Activated naive CD4-positive, alpha-beta T cell treated with anti-CD3 and anti-CD28 coated beads for 36 hours (primary cell): ENCODE measurements at regions of chr19 and their contacts with region 1.

Region 1: GRCh38 chr19:36605101-36605876 is at the start of gene ZNF382:
- DNase-seq: peak; percentile 87
- H3K4me3 Mint-ChIP-seq: peak within 1 kb of the TSS; percentile 81
- H3K27ac Mint-ChIP-seq: peak within 1 kb of the TSS; percentile 93
- H3K4me1 Mint-ChIP-seq: peaks cover 19% of the 10 kb centered on the region
- H3K27me3 Mint-ChIP-seq: no peaks in the 10 kb centered on the region
- total RNA-seq, gene ZNF382: 7.5 to 7.6 TPM

Region 2: GRCh38 chr19:36132489-36132891 is 472.8 kb before region 1 on chr19:
- CTCF ChIA-PET with region 1: no interaction called
- intact Hi-C with region 1: loop called (anchors 10 kb)
- DNase-seq: peak; percentile 61
- H3K4me3 Mint-ChIP-seq: no peak overlapping the region
- H3K27ac Mint-ChIP-seq: peak overlapping the region; percentile 18
- H3K4me1 Mint-ChIP-seq: peaks cover 32% of the 10 kb centered on the region
- H3K27me3 Mint-ChIP-seq: no peaks in the 10 kb centered on the region

Region 3: DNA sequence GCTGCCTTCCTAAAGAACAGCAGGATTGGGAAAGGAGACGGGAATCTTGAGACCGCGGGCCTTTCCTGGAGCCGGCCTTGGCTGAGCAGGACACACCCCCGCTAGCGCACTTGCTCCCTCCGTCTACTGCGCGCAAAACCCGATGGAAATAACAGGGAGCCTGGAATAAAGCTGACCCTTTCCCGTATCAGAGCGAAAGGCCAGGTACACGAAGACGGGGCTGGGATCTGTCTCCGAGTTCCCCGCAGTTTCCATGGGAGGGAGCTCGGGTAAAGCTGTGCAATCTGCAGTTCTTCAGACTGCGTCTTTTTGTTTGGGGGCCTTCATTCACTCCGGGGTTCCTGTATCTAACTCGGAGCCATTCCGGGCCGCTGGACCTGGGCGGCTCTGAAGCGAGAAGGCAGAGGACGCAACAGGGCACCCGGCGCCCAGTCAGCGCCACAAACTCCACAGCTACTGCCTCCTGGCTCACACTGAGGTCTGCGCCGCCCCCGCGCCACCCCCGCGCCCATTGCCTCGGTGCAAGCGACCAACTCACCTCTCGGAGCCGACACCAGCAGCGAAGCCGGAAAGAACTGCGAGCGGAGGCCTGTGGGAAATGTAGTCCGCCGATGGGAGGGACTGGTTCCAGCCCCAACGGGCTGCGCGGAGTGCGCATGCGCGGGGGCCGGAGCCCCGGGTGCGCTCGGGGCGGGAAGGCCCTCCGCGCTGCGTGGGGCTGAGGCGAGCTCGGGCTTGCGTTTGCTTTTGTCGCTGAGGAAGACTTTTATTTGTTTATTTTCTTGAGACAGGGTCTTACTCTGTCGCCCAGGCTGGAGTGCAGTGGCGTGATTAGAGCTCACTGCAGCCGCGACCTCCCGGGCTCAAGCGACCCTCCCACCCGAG is 226.4 kb before region 1 on chr19 and contains the start of gene ZFP14:
- CTCF ChIA-PET with region 1: no interaction called
- intact Hi-C with region 1: loop called (anchors 1 kb)
- DNase-seq: peak; percentile 96
- H3K4me3 Mint-ChIP-seq: peak within 1 kb of the TSS; percentile 90
- H3K27ac Mint-ChIP-seq: peak within 1 kb of the TSS; percentile 84
- H3K4me1 Mint-ChIP-seq: peaks cover 10% of the 10 kb centered on the region
- H3K27me3 Mint-ChIP-seq: no peaks in the 10 kb centered on the region
- total RNA-seq, gene ZFP14: 2.2 to 3.1 TPM

Region 4: GRCh38 chr19:36418287-36419001 is 186.8 kb before region 1 on chr19 and contains the start of gene ZFP82:
- CTCF ChIA-PET with region 1: no interaction called
- intact Hi-C with region 1: loop called (anchors 2 kb)
- DNase-seq: peak; percentile 81
- H3K4me3 Mint-ChIP-seq: peak within 1 kb of the TSS; percentile 92
- H3K27ac Mint-ChIP-seq: peak within 1 kb of the TSS; percentile 92
- H3K4me1 Mint-ChIP-seq: peaks cover 19% of the 10 kb centered on the region
- H3K27me3 Mint-ChIP-seq: peaks cover 18% of the 10 kb centered on the region
- total RNA-seq, gene ZFP82: 2.4 to 2.6 TPM

Region 5: GRCh38 chr19:36573020-36573885 is 32.0 kb before region 1 on chr19 and contains the start of gene ZNF529:
- CTCF ChIA-PET with region 1: interaction called, 3 read pairs
- intact Hi-C with region 1: loop called (anchors 1 kb)
- DNase-seq: peak; percentile 90
- H3K4me3 Mint-ChIP-seq: peak within 1 kb of the TSS; percentile 80
- H3K27ac Mint-ChIP-seq: peak within 1 kb of the TSS; percentile 85
- H3K4me1 Mint-ChIP-seq: peaks cover 20% of the 10 kb centered on the region
- H3K27me3 Mint-ChIP-seq: no peaks in the 10 kb centered on the region
- total RNA-seq, gene ZNF529: 17.1 to 18.3 TPM

Region 6: DNA sequence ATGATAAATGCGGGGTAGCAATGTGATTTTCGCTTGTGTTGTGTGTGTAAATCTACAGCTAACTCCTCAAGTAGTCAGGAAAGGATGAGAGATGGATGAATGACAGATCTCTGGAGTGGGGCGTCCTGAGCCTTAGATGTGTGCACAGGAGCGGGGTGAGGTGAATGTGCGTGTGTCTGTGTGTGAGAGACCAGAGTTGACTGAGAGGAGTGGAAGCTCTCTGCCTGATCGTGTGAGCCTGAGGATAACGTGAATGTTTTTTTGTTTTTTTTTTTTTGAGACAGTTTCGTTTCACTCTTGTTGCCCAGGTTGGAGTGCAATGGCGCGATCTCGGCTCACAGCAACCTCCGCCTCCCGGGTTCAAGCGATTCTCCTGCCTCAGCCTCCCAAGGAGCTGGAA is 60.5 kb after region 1 on chr19:
- CTCF ChIA-PET with region 1: no interaction called
- intact Hi-C with region 1: loop called (anchors 1 kb)
- DNase-seq: no peak
- H3K4me3 Mint-ChIP-seq: peak overlapping the region; percentile 91
- H3K27ac Mint-ChIP-seq: no peak overlapping the region
- H3K4me1 Mint-ChIP-seq: peaks cover 20% of the 10 kb centered on the region
- H3K27me3 Mint-ChIP-seq: no peaks in the 10 kb centered on the region

Region 7: DNA sequence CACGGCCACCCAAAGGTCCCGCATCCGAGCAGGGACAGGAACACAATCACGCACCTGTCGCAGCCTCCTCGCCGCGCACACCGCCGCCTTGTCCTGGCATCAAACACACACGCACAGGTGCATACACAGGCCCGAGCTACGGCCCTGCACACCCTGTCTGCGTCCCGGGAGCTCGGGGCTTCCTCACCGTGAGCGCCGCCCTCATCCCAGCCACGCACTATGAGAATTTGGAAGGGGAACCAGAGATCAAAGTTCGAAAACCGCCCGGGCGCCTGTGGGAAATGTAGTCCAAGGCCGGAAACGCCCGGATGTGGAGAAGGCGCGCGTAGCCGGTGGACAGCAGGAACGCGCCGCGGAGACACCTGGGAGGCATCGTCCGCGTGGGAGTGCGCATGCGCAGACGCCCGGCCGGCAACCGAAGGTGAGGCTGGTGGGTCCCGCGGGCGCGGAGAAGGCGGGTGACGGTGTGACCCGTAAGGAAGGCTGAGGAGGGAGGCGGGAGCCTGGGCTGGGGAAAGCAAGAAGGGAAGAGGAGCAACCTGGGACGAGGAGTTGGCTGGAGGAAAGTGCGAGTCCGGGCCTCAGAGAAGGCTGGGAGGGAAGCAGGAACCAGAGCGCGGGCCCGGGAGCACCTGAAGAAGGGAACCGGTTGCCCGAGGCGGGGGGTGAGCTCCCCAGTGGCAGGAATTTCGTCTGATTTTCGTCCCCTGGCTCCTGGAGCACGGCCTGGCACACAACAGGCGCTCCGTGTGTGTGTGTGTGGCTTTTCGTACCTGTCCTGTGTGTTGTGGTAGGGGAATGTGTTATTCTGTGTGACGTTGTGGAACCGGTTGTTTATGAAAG is 82.1 kb after region 1 on chr19 and contains the start of gene ZNF567:
- CTCF ChIA-PET with region 1: no interaction called
- intact Hi-C with region 1: loop called (anchors 1 kb)
- DNase-seq: peak; percentile 98
- H3K4me3 Mint-ChIP-seq: peak within 1 kb of the TSS; percentile 88
- H3K27ac Mint-ChIP-seq: peak within 1 kb of the TSS; percentile 90
- H3K4me1 Mint-ChIP-seq: peaks cover 26% of the 10 kb centered on the region
- H3K27me3 Mint-ChIP-seq: no peaks in the 10 kb centered on the region
- total RNA-seq, gene ZNF567: 6.0 to 6.8 TPM

Region 8: DNA sequence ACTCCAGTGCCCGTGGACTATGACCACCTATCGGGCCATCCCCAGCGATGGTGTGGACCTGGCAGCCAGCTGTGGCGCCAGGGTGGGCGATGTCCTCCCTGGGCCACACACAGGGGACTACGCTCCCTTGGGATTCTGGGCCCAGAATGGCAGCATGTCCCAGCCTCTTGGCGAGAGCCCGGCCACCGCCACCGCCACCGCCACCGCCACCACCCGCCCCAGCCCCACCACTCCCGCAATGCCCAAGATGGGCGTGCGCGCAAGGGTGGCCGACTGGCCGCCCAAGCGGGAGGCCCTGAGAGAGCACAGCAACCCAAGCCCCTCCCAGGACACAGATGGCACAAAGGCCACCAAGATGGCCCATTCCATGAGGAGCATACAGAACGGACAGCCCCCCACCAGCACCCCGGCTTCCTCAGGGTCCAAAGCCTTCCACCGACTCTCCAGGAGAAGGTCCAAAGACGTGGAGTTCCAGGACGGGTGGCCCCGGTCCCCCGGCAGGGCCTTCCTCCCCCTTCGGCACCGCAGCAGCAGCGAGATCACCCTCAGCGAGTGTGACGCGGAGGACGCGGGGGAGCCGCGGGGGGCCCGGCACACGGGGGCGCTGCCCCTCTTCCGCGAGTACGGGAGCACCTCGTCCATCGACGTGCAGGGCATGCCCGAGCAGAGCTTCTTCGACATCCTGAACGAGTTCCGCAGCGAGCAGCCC is 1476.4 kb after region 1 on chr19:
- CTCF ChIA-PET with region 1: no interaction called
- intact Hi-C with region 1: no loop called
- DNase-seq: no peak
- H3K4me3 Mint-ChIP-seq: no peak overlapping the region
- H3K27ac Mint-ChIP-seq: no peak overlapping the region
- H3K4me1 Mint-ChIP-seq: peaks cover 21% of the 10 kb centered on the region
- H3K27me3 Mint-ChIP-seq: no peaks in the 10 kb centered on the region